Activated CD4-positive, alpha-beta memory T cell treated with anti-CD3 and anti-CD28 coated beads for 36 hours (primary cell): ENCODE measurements at regions of chr1 and their contacts with region 1.

Region 1: DNA sequence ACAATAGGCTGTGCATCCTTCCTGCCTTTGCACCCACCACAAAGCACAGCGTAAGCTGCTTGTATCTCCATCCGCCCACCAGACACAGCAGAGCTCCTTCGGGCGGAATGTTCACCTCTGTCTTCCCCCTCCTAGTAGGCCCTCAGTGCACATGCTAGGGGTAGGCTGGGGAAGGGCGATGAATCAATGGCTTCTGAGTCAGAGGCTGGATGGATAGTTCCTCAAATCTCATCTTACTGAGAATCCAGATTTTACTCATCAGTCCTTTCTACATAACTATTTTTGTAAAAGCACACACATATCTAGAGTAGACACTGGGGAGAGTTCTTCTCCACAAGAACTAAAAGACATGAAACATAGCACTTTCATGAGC is 73.8 kb downstream of the BCAR3 start:
- DNase-seq: peak; percentile 85
- H3K4me3 Mint-ChIP-seq: no peak overlapping the region
- H3K27ac Mint-ChIP-seq: peak overlapping the region; percentile 43
- H3K4me1 Mint-ChIP-seq: peaks cover 39% of the 10 kb centered on the region
- H3K27me3 Mint-ChIP-seq: peaks cover 21% of the 10 kb centered on the region

Region 2: GRCh38 chr1:93537924-93538323 is 69.9 kb before region 1 on chr1:
- CTCF ChIA-PET with region 1: no interaction called
- POLR2A ChIA-PET with region 1: no interaction called
- intact Hi-C with region 1: loop called (anchors 5 kb)
- DNase-seq: no peak
- H3K4me3 Mint-ChIP-seq: no peak overlapping the region
- H3K27ac Mint-ChIP-seq: no peak overlapping the region
- H3K4me1 Mint-ChIP-seq: no peaks in the 10 kb centered on the region
- H3K27me3 Mint-ChIP-seq: no peaks in the 10 kb centered on the region

Region 3: DNA sequence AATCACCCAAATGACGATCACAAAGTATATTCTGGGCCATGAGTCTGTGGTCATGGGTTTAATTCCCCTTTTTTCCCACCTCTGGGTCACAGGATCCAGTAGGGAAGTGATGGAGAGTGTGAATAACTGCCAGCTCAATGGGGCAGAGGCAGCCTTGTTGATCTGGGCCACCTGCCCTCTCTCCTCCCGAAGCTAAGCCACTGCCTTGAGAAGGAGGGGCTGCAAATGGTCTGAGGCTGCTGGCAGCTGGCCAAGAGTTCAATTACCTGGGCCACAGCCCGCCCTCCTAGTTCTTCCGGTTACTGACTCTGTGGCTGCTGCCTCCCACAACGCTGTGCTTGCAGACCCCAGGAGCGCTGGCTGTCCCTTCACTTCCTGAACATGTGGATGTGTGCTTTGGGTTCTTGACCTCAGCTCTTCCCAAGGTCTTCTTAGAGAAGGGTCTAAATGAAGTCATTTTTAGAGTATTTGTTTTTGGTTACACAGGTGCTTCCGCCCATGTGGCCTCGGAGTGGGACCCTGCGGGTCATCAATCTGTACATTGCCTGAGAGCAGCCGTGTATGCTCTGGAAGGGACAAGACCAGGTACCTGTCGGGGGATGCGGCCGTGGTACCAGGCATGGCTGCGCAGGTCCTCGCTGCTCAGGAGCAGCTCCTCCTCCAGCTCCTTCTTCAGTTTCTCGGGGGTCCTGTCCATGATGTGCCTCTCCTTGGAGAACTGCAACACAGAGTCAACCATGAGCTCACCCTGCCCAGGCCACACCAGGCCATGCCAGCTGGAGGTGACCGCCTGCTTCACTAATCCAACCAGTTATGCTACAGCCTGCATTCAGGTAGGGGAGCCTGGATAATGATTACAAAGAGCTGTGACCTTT is 15.9 kb before region 1 on chr1:
- CTCF ChIA-PET with region 1: no interaction called
- POLR2A ChIA-PET with region 1: no interaction called
- intact Hi-C with region 1: no loop called
- DNase-seq: peak; percentile 10
- H3K4me3 Mint-ChIP-seq: no peak overlapping the region
- H3K27ac Mint-ChIP-seq: no peak overlapping the region
- H3K4me1 Mint-ChIP-seq: peaks cover 8% of the 10 kb centered on the region
- H3K27me3 Mint-ChIP-seq: peaks cover 2% of the 10 kb centered on the region